ENCODE measurements at regions of chr18 and their contacts with region 1.

Region 1: DNA sequence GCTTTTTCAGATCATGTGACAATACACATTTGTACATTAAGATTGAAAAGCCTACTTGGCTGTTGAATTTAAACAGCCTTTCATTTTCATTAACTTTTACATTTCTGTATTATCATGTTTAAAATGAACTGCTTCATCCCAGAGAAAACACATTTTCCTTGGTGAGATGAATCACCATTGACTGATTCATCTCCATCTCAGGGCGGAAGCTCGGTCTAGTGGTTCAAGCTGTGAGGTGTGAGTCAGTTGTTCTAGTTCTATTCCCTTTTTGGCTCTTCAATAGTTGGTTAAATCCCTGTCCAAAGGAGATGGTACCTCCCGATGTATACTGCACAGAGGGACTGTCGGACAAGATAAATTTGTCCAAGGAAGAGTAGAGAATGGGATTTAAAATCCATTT is 189.7 kb downstream of the ADCYAP1 start:
- DNase-seq: no peak
- ATAC-seq: no peak
- H3K4me3 ChIP-seq: no peak overlapping the region
- H3K27ac ChIP-seq: no peak overlapping the region
- H3K4me1 ChIP-seq: no peaks in the 10 kb centered on the region
- H3K27me3 ChIP-seq: no peaks in the 10 kb centered on the region

Region 2: DNA sequence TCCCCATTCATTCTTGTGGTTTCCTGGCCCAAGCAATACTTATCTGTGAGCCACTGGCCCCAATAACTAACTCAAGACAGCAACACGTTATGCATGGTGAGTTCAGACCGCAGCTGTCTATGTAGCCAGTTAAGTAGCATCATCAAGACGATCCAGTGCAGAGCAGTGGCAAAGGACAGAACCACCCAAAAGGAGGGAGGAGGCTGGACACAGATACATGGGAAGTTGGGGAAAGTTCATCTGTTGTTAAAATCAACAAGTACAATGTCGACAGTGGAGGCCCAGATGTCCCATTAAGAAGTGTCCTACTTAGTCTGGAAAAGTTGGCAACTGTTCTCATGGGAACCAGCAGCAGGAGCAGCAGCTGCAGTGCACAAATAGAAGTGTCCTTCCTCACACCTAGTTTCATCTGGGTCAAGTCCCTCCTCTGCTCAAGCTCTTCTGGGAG is 719.7 kb before region 1 on chr18:
- intact Hi-C with region 1: no loop called
- DNase-seq: no peak
- ATAC-seq: peak; percentile 12
- H3K4me3 ChIP-seq: no peak overlapping the region
- H3K27ac ChIP-seq: no peak overlapping the region
- H3K4me1 ChIP-seq: peaks cover 2 to 8% of the 10 kb centered on the region in 2 donors
- H3K27me3 ChIP-seq: no peaks in the 10 kb centered on the region

Region 3: DNA sequence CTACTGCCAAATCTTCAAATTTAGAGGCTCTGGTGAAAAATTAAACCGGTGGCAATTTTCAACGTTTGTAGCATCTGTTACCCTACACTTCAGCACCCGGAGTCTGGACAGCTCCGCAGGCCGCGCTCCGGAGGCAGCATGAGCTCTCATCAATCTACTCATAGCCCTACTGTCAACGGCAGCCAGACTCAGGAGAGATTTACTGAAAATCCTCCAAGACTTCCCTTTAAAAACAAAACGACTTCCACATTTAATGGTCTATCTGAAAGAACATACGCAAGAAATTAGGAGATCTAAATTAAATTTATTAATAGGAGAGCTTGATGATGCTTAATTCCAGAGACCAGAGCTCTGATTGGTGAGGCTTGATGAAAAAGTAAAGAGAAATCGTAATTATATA is 190.7 kb before region 1 on chr18:
- intact Hi-C with region 1: loop called in 1 of 2 experiments (anchors 10 kb)
- DNase-seq: peak; percentile 65 to 88
- ATAC-seq: no peak
- H3K4me3 ChIP-seq: no peak overlapping the region
- H3K27ac ChIP-seq: no peak overlapping the region
- H3K4me1 ChIP-seq: no peaks in the 10 kb centered on the region
- H3K27me3 ChIP-seq: no peaks in the 10 kb centered on the region